CD14-positive monocyte (primary cell): ENCODE measurements at regions of chr6 and their contacts with region 1.

Region 1: DNA sequence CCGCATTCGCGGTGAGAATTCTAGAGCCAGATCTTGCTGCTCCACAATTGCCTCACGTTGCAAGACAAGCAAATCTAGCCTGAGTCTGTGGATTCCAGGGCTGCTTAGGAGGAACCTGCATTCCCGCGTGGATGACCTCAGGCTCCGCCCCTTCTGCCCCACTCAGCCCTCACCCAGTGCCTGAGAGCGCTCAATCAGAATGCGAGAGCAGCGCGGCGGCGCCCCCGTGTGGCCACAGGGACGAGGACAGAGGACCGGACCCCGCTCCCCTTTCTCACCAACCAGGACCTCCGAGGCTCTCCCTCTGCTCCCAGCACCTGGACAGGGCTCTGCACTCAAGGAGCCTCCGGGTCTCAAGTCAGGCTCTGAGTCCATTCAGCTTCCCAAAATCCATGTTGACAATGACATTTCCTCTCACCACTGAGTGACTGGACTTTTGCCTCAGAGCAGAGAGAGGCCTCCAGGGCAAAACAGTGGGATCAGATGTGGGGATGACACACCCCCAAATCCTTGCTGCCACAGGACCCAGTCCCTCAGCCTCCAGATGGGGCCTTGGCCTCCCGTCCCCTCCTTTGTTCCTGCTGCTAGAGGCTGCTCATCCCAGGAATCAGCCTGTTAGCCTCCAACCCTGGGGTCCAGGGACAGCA is 52.0 kb downstream of the RPP21 start:
- DNase-seq: peak; percentile 70 to 84 (median 73)
- H3K4me3 ChIP-seq: no peak overlapping the region
- H3K4me3 Mint-ChIP-seq: peak overlapping the region in 1 of 2 donors; percentile 43
- H3K27ac ChIP-seq: no peak overlapping the region
- H3K27ac Mint-ChIP-seq: no peak overlapping the region
- H3K4me1 ChIP-seq: no peaks in the 10 kb centered on the region
- H3K4me1 Mint-ChIP-seq: peaks cover 4% of the 10 kb centered on the region
- H3K27me3 ChIP-seq: peaks cover 21 to 59% of the 10 kb centered on the region in 2 donors
- H3K27me3 Mint-ChIP-seq: peaks cover 35 to 64% (median 46%) of the 10 kb centered on the region in 3 donors
- CTCF ChIP-seq: peak; percentile 82

Region 2: DNA sequence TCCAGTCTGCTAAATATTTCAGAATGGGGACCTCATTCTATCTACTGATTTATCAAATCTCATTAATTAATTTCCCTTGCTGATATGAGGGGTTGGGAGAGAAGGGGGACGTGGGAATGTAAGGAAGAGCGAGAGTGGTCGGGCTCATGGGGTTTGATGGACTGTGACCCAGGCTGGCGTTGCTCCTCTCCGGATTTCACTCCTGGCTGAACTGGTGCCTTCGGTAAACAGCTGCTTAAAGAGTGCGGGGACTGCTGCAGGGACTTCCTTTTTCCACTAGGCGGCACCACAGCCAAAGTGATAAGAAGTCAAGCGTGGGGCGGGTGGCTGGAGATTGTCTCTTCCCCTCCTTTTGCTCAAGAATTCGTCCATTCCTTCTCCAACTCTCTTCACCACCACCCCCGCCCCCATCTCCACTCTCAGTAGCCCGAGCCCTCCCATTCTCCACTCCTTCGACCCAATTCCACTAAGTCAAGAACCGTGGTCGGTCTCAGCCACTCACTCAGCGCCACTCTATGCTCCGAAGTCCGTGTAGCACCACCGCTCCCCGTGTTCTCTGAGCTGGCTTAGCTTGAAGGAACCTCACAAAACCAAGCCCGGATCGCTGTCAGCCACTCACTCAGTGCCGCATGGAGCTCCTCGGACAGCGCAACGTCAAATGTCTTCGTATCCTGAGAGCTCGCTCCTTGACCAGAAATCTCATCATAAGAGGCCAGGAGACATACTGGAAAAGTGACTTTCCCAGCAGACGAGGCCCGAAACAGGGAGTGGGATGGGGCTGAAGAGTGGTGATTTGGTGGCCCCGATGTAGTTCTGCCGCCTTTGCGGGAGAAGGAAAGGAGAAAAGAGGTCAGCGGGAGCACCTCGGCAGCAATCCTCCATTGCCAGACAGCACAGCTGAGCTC is 293.7 kb before region 1 on chr6:
- intact Hi-C with region 1: loop called in 1 of 2 experiments (anchors 5 kb)
- DNase-seq: peak; percentile 66 to 81 (median 79)
- H3K4me3 ChIP-seq: peak overlapping the region; percentile 2 to 77 (median 12)
- H3K4me3 Mint-ChIP-seq: peak overlapping the region; percentile 81 to 97
- H3K27ac ChIP-seq: no peak overlapping the region
- H3K27ac Mint-ChIP-seq: peak overlapping the region in 5 of 7 donors; percentile 49 to 78 (median 61)
- H3K4me1 ChIP-seq: peaks cover 34 to 38% of the 10 kb centered on the region in 2 donors
- H3K4me1 Mint-ChIP-seq: peaks cover 43% of the 10 kb centered on the region
- H3K27me3 ChIP-seq: peaks cover 48 to 68% of the 10 kb centered on the region in 2 donors
- H3K27me3 Mint-ChIP-seq: peaks cover 59 to 77% (median 64%) of the 10 kb centered on the region in 3 donors
- CTCF ChIP-seq: peak; percentile 86

Region 3: DNA sequence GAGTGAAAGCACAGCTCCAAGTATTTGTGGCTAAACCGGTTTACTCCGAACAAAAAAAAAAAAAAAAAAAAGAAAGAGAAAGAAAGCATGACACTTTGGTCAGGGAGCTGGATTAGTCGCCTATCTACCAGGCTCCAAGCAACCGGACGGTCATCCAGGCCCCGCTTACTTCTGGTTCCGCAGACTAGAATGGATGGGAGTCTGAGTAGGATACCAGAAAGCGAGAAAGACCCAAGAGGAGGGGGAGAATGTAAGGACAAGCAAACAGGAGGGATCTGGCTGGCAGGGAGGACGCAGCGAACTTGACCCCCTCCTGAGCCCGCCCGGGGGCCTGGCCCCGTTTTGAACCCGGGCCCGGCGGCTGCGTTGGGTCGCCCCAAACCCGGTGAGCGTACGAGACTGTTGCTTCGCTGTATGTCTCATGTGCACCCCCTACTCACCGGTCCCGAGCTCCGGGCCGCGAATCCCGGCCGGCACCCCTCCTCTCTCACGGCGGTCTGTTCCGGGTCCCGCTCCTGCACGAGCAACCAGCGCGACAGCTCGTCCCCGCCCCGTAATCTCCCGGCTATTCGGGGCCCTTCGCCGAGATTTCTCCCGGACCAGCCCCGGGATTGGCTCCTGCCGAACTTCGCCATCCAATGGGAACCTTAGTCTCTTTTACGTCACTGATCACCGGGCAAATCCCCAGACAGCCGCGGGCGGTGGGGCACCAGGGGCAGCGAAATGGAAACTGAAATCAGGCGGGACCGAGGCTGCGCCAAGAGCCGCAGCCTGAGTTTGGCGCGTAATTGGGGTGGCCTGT is 183.9 kb before region 1 on chr6 and contains the start of gene TRIM26:
- intact Hi-C with region 1: loop called in 1 of 2 experiments (anchors 10 kb)
- DNase-seq: peak; percentile 96
- H3K4me3 ChIP-seq: peak within 1 kb of the TSS; percentile 84 to 95 (median 88)
- H3K4me3 Mint-ChIP-seq: peak within 1 kb of the TSS; percentile 96 to 99
- H3K27ac ChIP-seq: peak within 1 kb of the TSS; percentile 94 to 95
- H3K27ac Mint-ChIP-seq: peak within 1 kb of the TSS; percentile 96 to 99 (median 99)
- H3K4me1 ChIP-seq: peaks cover 28 to 35% of the 10 kb centered on the region in 2 donors
- H3K4me1 Mint-ChIP-seq: peaks cover 44% of the 10 kb centered on the region
- H3K27me3 ChIP-seq: no peaks in the 10 kb centered on the region
- H3K27me3 Mint-ChIP-seq: peaks cover 0 to 2% (median 2%) of the 10 kb centered on the region in 3 donors
- CTCF ChIP-seq: no peak
- polyA plus RNA-seq, gene TRIM26: 16.4 to 26.4 (median 26.0) TPM

Region 4: GRCh38 chr6:30326526-30327260 is 70.3 kb before region 1 on chr6 and contains the start of gene TRIM39:
- intact Hi-C with region 1: no loop called
- DNase-seq: peak; percentile 76 to 90 (median 77)
- H3K4me3 ChIP-seq: peak within 1 kb of the TSS; percentile 78 to 89 (median 82)
- H3K4me3 Mint-ChIP-seq: peak within 1 kb of the TSS; percentile 94 to 98
- H3K27ac ChIP-seq: peak within 1 kb of the TSS; percentile 86 to 94
- H3K27ac Mint-ChIP-seq: peak within 1 kb of the TSS; percentile 96 to 99 (median 99)
- H3K4me1 ChIP-seq: peaks cover 22 to 29% of the 10 kb centered on the region in 2 donors
- H3K4me1 Mint-ChIP-seq: peaks cover 49% of the 10 kb centered on the region
- H3K27me3 ChIP-seq: no peaks in the 10 kb centered on the region
- H3K27me3 Mint-ChIP-seq: no peaks in the 10 kb centered on the region
- CTCF ChIP-seq: no peak
- polyA plus RNA-seq, gene TRIM39: 3.5 to 16.3 (median 3.6) TPM

Region 5: DNA sequence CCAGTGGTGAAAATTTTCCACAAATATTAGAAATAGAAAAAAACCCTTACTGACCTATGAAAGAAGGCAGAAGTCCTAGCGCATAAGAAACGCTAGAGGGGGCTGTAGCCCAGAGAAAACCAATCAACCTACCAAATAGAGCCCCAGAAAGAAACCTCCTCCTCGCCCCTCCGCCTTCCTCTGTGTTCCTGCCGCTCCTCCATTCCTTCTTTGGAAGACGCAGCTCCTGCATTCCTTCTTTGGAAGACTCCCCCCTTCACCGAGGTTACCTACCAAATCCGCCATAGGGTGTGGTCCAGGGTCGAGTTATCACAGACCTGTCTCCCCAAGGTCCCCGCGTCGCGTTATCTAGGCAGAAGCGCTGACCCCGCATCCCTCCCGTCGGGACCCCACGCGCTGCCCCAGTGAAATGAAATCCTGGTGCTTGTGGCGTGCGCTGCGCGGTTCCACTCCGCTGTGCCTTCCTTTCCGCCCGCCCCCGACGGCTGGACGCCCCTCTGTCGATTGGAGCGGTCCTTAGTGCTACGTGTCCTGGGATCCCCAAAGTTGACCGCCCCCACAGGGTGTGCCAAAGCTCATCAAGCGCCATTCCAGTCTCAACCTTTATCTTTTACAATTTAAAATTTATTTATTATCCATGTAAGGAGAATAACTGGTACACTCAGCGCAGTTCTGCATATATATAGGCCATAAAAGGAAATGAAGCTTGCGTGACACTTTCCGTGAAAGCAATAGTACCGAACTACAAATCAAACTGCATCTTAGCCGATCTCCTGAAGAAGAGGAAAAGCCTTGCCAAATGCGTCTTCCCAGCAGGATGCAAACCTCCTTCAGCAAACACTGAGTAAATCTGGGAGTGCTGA is 39.0 kb before region 1 on chr6:
- intact Hi-C with region 1: loop called (anchors 2 to 5 kb)
- DNase-seq: peak; percentile 20 to 50 (median 38)
- H3K4me3 ChIP-seq: peak overlapping the region in 1 of 3 experiments; percentile 47
- H3K4me3 Mint-ChIP-seq: peak overlapping the region; percentile 72 to 89
- H3K27ac ChIP-seq: no peak overlapping the region
- H3K27ac Mint-ChIP-seq: peak overlapping the region in 1 of 7 donors; percentile 64
- H3K4me1 ChIP-seq: peaks cover 7 to 8% of the 10 kb centered on the region in 2 donors
- H3K4me1 Mint-ChIP-seq: peaks cover 7% of the 10 kb centered on the region
- H3K27me3 ChIP-seq: peaks cover 78 to 85% of the 10 kb centered on the region in 2 donors
- H3K27me3 Mint-ChIP-seq: peaks cover 65 to 86% (median 70%) of the 10 kb centered on the region in 3 donors
- CTCF ChIP-seq: peak; percentile 83

Region 6: DNA sequence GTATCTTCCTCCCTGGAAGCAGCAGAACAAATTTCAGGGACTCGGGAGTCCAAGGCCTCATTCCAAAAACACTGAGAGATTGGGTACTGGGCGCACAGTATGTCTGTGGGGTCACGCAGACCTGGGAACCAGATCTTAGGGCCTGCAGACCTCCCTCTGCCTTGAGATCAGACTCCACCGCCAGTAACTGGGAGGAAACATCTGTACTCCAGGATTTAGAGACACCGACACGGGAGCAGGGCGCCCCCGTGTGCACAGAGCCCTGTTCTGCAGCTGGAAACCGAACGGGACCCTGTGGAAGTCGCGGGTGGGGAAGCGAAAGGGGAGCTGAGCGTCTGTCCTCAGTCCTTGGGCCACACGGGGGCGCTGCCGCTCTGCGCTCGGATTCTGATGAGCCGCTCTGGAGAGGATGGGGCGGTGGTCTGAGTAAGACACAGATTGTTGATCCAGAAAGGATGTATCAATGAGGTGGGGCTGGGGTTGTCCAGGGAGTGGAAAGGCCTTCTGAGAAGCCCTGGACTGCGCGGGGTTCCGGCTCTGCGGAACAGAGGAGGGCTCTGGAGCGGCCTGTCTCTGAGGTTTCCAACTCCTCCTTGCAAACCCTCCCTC is 56.7 kb after region 1 on chr6:
- intact Hi-C with region 1: no loop called
- DNase-seq: peak; percentile 78 to 86 (median 79)
- H3K4me3 ChIP-seq: no peak overlapping the region
- H3K4me3 Mint-ChIP-seq: peak overlapping the region in 1 of 2 donors; percentile 83
- H3K27ac ChIP-seq: no peak overlapping the region
- H3K27ac Mint-ChIP-seq: no peak overlapping the region
- H3K4me1 ChIP-seq: peaks cover 35 to 39% of the 10 kb centered on the region in 2 donors
- H3K4me1 Mint-ChIP-seq: peaks cover 38% of the 10 kb centered on the region
- H3K27me3 ChIP-seq: peaks cover 88 to 97% of the 10 kb centered on the region in 2 donors
- H3K27me3 Mint-ChIP-seq: peaks cover 88 to 98% (median 98%) of the 10 kb centered on the region in 3 donors
- CTCF ChIP-seq: peak; percentile 98